ENCODE measurements at regions of chr10 and their contacts with region 1.

Region 1: DNA sequence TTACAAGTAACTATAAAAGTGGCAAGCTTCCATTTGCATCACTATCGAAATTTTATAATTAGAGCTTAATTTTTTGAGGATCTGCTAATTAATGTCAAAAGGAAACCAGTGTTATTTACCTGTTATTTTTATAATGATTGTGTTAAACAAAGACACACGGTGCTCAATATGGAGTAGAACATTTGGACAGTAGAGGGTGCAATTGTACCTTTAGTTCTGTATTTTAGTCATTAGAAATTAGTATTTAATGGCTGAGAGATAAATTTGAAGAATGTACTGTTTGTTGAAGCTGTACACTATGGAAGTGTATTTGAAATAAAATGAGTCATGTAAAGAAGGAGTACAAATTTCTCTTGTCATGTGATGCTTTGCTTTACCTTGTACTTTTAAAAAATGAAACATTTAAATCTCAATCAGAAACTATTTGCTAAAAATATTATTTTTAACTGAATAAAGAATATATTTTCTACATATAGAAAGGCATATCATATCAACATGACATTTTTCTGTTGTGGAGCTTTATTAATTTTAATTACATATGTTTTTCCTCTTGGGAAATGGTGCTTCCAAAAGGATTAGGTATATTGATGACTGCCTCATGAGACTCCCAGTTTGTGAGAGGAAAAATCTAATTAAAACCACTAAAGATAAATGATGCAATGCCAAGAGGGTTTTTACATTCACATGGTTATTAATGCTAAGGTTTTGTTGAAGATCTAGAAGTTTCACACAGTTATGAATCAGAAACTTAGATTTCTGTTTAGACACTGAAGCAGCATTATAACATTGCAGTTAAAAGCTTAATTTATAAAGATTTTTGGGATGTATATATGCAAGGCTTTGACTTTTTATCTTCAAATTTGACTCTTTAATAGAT is 10.4 kb upstream of the PRKG1 start:
- DNase-seq: no peak
- H3K4me3 ChIP-seq: no peak overlapping the region
- H3K27ac ChIP-seq: no peak overlapping the region
- H3K4me1 ChIP-seq: no peaks in the 10 kb centered on the region
- H3K27me3 ChIP-seq: no peaks in the 10 kb centered on the region
- CTCF ChIP-seq: peak; percentile 45 to 61 (median 52)
- POLR2A ChIP-seq: no peak

Region 2: DNA sequence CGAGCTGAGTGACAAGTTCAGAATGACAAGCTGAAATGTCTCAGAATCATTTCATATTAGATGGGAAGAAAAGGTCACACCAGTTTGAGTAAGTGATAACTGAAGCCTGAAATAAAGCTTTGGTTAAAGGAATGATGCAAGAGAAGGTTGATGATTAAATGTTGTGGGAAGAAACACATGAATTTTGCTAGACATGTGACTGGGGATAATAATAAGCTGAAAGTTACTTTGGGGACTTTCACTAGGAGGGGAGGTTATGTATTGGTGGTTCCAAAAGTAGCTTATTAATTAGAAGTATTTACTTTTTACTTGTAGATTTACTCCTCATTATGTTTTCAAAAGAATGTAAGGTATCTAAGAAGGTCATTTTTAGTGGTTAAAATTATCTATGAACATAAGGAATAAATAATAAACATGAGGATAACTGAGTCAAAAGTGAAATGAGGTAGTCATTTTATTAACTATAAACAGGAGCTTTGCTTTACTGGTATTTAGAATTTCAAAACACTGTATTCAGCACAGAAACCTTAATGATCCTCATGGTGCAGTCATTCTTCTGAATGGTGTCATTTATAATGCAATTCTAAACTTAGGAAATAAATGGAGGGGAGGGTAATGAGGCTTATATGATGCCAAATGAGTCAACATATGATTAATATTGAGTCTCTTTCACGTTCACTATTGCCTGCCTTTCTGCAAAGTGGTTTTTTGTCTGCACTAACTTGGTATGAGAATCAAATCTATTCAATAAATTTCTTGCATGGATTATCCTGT is 74.0 kb after region 1 on chr10:
- intact Hi-C with region 1: no loop called
- DNase-seq: no peak
- H3K4me3 ChIP-seq: no peak overlapping the region
- H3K27ac ChIP-seq: no peak overlapping the region
- H3K4me1 ChIP-seq: peaks cover 7% of the 10 kb centered on the region
- H3K27me3 ChIP-seq: no peaks in the 10 kb centered on the region
- CTCF ChIP-seq: no peak
- POLR2A ChIP-seq: no peak

Region 3: GRCh38 chr10:52198540-52198939 is 1134.6 kb after region 1 on chr10:
- intact Hi-C with region 1: loop called (anchors 5 kb)
- DNase-seq: no peak
- H3K4me3 ChIP-seq: no peak overlapping the region
- H3K27ac ChIP-seq: no peak overlapping the region
- H3K4me1 ChIP-seq: no peaks in the 10 kb centered on the region
- H3K27me3 ChIP-seq: no peaks in the 10 kb centered on the region
- CTCF ChIP-seq: no peak
- POLR2A ChIP-seq: no peak

Measured in vagina (tissue), 2 donors.